ENCODE measurements at regions of chr9 and their contacts with region 1.

Region 1: GRCh38 chr9:136644598-136645351 is 17.9 kb upstream of the EGFL7 start:
- DNase-seq: peak; percentile 94

Region 2: DNA sequence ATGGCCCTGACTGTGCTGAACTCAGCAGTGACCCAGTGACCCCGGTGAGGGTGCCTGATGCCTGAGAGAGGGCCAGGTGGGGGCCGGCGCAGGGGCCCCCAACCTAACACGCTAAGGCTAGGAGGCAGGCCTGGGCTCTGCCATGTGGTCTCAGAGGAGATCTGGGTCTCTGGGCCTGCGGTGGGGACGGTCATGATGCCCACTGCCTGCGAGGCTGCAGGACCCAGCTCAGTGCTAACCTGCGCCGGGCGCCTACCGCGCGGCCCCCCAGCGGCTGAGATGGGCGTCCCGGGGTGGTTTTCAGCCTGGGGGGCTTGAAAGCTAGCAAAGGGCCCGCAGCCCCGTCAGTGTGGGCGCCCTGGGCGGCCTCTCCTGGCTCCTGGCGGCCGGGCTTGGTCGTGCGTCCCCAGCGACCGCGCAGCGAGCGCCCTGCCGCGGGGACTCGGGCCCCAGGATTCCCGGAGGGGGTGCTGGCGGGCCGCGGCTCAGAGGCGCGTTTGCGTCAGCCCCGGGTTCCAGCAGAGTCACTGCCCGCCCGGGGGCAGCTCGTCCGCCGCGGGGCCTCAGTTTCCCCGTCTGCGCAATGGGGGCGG is 20.4 kb after region 1 on chr9:
- intact Hi-C with region 1: loop called (anchors 2 kb)
- DNase-seq: no peak

Region 3: GRCh38 chr9:137564817-137565411 is 920.1 kb after region 1 on chr9:
- intact Hi-C with region 1: no loop called
- DNase-seq: no peak